Activated T-helper 1 cell treated with anti-CD3 and anti-CD28 coated beads, Interleukin-12 subunit alpha, Interleukin-12 subunit beta, Interleukin-2, Interleukin-4 antibody, amounts not matched to agents 30 ng/mL and 10 ng/mL and 1 ng/mL, durations not matched to agents 14 hours and 24 hours and 36 hours (primary cell): ENCODE measurements at regions of chr22 and their contacts with region 1.

Region 1: DNA sequence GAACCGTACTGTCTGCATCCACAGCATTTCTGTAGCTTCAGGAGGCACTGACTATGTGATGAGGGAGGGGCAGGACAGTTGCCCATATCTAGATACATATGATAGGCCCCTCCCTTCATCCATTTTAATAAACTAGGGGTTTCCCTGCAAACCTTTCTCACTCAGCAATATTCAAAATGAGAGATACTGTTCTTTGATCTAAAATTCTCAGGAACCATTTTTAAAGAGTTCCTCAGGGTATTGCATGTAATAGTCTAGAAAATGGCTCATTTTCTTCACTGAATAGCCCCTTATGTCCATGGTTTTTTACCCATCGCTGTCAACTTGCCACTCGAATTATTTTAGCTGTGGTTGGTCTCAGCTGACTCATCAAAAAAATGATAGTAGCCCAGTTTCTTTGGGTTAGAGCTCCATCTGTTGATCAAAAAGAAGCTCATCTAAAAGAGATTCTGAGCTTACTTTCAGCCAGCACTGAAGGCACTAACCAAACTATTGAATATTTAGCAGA is 37.0 kb upstream of the DNAJB7 start:
- DNase-seq: peak; percentile 8
- H3K4me3 Mint-ChIP-seq: no peak overlapping the region
- H3K27ac Mint-ChIP-seq: no peak overlapping the region
- H3K4me1 Mint-ChIP-seq: peaks cover 10% of the 10 kb centered on the region
- H3K27me3 Mint-ChIP-seq: no peaks in the 10 kb centered on the region

Region 2: DNA sequence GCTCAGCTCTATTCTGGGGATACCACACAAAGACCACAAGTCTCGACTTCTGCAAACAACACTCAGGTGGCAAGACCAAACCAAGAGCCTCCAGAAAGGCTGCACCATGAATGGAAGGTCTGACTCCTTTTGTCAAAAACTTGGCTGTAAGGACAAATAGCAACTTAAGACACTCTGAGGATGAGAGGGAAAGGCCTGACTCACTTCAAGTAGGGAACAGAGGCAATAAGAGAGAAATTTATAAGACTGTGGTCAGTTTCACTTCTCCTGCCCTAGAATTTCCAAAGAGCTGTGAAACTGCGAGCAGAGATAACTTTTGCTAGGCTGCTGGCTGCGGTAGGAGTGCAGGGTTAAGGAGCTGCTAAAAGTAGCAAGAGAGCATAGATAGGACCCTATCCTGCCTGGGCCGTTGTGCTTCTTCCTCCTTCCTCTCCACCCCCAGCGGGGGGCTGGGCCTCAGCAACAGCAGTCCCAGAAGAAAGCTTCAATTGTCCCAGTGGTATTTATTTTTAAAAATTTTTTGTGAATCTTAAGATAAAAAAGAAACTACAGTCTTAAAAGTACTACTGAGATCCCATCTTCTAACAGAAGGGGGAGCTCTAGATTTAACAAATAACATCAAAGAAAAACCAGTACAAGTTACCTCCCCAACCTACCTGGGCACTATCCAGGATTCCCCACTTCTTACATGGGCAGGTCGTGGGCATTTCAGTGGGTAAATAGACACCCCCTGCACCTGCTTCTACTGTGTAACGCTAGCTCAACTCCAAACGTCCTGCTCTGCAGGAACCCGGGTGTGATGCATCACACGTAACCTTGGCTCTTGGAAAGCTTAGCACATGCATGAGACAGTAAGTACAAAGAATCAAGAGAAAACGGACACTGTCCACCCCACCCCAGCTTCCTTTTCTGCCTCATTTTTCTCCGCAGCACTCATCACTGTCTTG is 462.1 kb before region 1 on chr22:
- intact Hi-C with region 1: loop called (anchors 1 kb)
- DNase-seq: no peak
- H3K4me3 Mint-ChIP-seq: no peak overlapping the region
- H3K27ac Mint-ChIP-seq: peak overlapping the region; percentile 51
- H3K4me1 Mint-ChIP-seq: peaks cover 45% of the 10 kb centered on the region
- H3K27me3 Mint-ChIP-seq: no peaks in the 10 kb centered on the region

Region 3: DNA sequence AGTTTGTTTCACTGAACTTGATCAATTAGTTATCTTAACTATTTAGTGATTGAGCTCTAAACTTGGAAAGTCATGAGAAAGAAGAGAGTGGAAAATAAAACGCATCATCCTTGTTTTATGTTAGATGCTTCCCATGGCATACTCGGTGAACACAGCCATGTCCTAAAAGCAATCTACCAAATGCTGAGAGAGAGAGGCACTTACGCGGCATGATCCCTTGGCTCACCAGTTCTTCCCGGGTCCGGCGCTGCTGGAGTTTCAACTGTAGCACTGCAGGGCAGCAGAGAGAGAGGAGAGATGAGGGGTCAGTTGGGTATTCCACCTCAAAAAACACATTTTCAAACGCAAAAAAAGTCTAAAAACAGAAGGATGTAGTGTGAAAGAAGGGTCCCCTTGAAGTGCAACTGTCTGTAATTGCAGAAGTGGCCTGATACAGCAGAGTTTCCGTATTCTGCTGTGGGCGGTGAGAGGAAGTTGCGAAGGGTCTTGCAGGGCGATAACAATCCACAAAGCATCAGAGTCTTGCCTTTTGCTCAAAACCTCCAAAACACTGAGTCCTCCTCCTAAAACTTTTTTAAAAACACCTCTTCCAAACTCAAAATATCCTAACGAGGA is 435.8 kb before region 1 on chr22:
- intact Hi-C with region 1: loop called (anchors 10 kb)
- DNase-seq: peak; percentile 37
- H3K4me3 Mint-ChIP-seq: peak overlapping the region; percentile 93
- H3K27ac Mint-ChIP-seq: peak overlapping the region; percentile 99
- H3K4me1 Mint-ChIP-seq: peaks cover 55% of the 10 kb centered on the region
- H3K27me3 Mint-ChIP-seq: no peaks in the 10 kb centered on the region

Region 4: DNA sequence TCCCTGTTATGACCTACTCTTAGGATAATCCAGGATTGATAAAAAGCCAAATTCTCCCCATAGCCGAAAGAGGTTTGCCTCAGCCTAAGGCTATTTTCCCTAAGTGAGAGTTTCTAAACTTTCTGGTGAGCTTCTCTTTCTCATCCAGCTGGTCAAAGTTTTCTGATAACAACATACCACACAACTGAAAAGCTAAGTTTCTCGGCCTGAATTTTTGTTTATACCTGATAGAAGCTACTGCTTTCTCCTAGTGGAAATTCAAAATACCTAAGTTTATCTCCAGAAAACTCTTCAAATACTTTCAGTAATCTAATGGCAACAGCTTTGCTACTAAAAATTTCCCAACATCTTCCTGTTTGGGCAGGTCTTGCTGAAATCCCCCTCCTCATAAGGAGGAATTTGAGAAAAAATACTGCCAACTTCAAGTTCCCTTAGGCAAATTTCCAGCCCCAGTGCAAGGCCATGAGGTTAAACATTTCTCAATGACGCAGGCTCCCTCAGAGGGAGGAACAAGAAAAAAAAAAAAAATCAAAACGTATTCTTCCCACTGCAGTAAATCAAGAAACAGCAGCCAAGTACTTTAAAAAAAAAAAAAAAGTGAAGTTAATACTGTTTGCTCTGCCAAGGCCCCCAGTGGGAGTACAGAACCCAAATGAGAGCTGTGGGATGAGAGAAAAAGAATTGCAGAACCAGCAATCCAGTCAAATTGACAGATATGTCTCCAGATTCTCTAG is 389.3 kb before region 1 on chr22:
- intact Hi-C with region 1: loop called (anchors 10 kb)
- DNase-seq: no peak
- H3K4me3 Mint-ChIP-seq: no peak overlapping the region
- H3K27ac Mint-ChIP-seq: no peak overlapping the region
- H3K4me1 Mint-ChIP-seq: peaks cover 8% of the 10 kb centered on the region
- H3K27me3 Mint-ChIP-seq: no peaks in the 10 kb centered on the region

Region 5: DNA sequence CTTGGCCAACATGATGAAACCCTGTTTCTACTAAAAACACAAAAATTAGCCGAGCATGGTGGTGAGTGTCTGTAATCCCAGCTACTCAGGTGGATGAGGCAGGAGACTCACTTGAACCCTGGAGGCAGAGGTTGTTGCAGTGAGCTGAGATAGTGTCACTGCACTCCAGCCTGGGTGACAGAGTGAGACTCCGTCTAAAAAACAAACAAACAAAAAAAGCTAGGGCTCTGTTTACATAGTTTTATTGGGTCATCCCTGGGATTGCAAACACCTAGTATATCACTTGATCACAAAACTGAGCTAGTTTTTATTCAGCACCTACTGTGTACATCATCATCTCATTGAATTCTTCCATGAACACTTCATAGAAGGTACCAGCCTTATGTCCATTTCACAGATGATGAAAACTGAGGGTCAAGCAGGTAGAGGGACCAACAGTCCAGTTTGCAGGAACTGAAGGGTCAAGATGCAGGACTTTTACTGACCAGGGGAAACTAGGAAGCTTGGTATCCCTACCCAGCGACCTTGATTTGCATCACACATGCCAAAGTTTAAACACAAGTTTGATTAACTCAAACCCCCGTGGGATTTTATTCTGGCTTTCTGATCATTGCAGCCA is 253.2 kb before region 1 on chr22:
- intact Hi-C with region 1: loop called (anchors 2 kb)
- DNase-seq: no peak
- H3K4me3 Mint-ChIP-seq: no peak overlapping the region
- H3K27ac Mint-ChIP-seq: no peak overlapping the region
- H3K4me1 Mint-ChIP-seq: peaks cover 20% of the 10 kb centered on the region
- H3K27me3 Mint-ChIP-seq: no peaks in the 10 kb centered on the region

Region 6: DNA sequence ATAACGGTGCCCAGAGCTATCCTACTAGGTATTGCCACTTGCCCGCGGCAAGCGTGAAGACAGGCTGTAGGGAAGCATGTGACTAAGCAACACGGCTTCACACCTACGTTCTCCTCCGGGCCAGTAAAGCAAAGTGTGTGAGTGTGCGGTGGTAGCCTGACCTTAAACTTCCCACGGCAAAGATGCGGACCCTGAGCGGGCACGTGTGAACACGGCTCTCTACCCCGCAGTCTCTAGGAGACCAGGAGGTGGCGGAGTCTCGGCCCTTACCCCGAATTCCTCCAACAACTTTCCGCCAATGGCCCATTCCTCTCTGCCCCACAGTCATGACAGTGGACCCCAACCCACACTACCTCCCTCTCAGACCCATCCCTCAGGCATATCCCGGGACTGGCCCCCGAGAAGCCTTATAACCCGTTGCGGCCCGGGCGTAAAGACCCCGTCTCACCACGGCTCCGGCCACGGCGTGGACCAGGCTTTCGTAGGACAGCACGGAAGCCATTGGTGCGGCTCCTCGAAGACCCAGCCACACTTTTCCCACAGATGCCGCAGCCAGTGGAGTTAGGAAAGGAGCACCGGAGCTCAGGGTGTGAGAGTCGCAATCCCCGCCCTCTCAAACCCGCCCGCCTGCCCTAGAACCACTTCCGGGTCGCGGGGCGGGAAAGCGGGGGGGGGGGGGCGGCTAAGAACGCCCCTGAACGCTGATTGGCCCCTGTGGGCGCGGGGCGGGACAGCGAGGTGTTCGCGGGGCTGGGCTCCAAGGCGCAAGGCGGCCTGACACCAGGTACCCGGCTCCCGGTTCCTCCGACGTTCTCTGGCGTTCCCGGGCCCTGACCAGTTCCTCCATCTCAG is 79.9 kb before region 1 on chr22 and contains the start of gene SLC25A17:
- intact Hi-C with region 1: loop called (anchors 1 kb)
- DNase-seq: peak; percentile 82
- H3K4me3 Mint-ChIP-seq: peak within 1 kb of the TSS; percentile 87
- H3K27ac Mint-ChIP-seq: peak within 1 kb of the TSS; percentile 93
- H3K4me1 Mint-ChIP-seq: peaks cover 33% of the 10 kb centered on the region
- H3K27me3 Mint-ChIP-seq: no peaks in the 10 kb centered on the region
- total RNA-seq, gene SLC25A17: 29.4 and 34.0 TPM in 2 replicates